Mammary epithelial cell (primary cell): ENCODE measurements at regions of chr11 and their contacts with region 1.

Region 1: GRCh38 chr11:77361184-77361583 is 59.7 kb upstream of the GDPD4 start:
- DNase-seq: peak; percentile 25
- H3K4me3 ChIP-seq: no peak overlapping the region
- H3K27ac ChIP-seq: no peak overlapping the region
- H3K4me1 ChIP-seq: no peaks in the 10 kb centered on the region
- H3K27me3 ChIP-seq: no peaks in the 10 kb centered on the region
- CTCF ChIP-seq: no peak

Region 2: DNA sequence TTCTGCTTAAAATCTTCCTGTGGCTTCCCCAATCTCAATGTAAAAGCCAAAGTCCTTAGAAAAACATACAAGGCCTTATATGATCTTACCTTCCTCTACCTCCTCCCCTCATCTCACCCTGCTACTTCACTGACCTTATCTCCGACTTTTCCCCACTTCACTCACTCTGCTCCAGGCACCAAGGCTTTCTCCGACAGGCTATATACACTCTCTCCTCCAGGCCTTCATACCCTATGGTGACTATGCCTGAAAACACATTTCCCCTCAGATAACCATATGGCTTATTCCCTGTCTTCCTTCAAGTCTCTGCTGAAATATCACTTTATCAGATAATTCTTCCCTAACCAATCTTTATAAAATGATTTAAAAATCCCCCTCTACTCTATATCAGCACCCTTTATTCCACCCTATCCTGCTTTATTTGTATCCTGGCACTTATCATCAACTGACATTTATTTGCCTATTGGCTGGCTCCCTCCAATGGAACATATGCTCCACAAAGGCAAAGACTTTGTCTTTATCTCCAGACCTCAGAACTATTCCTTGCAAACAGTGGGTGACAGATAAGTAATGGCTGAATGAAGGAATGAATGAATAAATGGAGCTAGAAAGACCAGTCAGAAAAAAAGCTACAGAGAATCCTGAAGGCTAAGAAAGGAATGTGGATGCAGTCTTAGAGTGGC is 60.0 kb after region 1 on chr11:
- CTCF ChIA-PET with region 1: no interaction called
- dilution Hi-C with region 1: loop called (anchors 10 kb)
- in situ Hi-C with region 1: no loop called
- intact Hi-C with region 1: no loop called
- DNase-seq: no peak
- H3K4me3 ChIP-seq: no peak overlapping the region
- H3K27ac ChIP-seq: no peak overlapping the region
- H3K4me1 ChIP-seq: no peaks in the 10 kb centered on the region
- H3K27me3 ChIP-seq: no peaks in the 10 kb centered on the region
- CTCF ChIP-seq: no peak